Activated CD8-positive, alpha-beta T cell treated with anti-CD3 and anti-CD28 coated beads for 36 hours (primary cell): ENCODE measurements at regions of chr3 and their contacts with region 1.

Region 1: GRCh38 chr3:197749601-197750395 is at the start of gene FYTTD1:
- DNase-seq: peak; percentile 81
- ATAC-seq: peak; percentile 85
- H3K4me3 Mint-ChIP-seq: peak within 1 kb of the TSS; percentile 98
- H3K27ac Mint-ChIP-seq: peak within 1 kb of the TSS; percentile 92
- H3K4me1 Mint-ChIP-seq: peaks cover 34% of the 10 kb centered on the region
- H3K27me3 Mint-ChIP-seq: no peaks in the 10 kb centered on the region
- CTCF ChIP-seq: no peak
- total RNA-seq, gene FYTTD1: 25.4 to 27.0 TPM

Region 2: GRCh38 chr3:197791113-197791891 is 41.5 kb after region 1 on chr3 and contains the start of gene LRCH3:
- CTCF ChIA-PET with region 1: interaction called, 4 read pairs
- POLR2A ChIA-PET with region 1: interaction called, 3 read pairs
- intact Hi-C with region 1: loop called (anchors 5 kb)
- DNase-seq: peak; percentile 85
- ATAC-seq: peak; percentile 68
- H3K4me3 Mint-ChIP-seq: peak within 1 kb of the TSS; percentile 98
- H3K27ac Mint-ChIP-seq: peak within 1 kb of the TSS; percentile 96
- H3K4me1 Mint-ChIP-seq: peaks cover 33% of the 10 kb centered on the region
- H3K27me3 Mint-ChIP-seq: no peaks in the 10 kb centered on the region
- CTCF ChIP-seq: no peak
- total RNA-seq, gene LRCH3: 43.8 to 53.5 TPM

Region 3: GRCh38 chr3:197801891-197802778 is 52.3 kb after region 1 on chr3:
- CTCF ChIA-PET with region 1: interaction called, 4 read pairs
- POLR2A ChIA-PET with region 1: no interaction called
- intact Hi-C with region 1: loop called (anchors 5 kb)
- DNase-seq: peak; percentile 62
- ATAC-seq: peak; percentile 82
- H3K4me3 Mint-ChIP-seq: no peak overlapping the region
- H3K27ac Mint-ChIP-seq: peak overlapping the region; percentile 67
- H3K4me1 Mint-ChIP-seq: peaks cover 50% of the 10 kb centered on the region
- H3K27me3 Mint-ChIP-seq: no peaks in the 10 kb centered on the region
- CTCF ChIP-seq: peak; percentile 64